ENCODE measurements at regions of chr1 and their contacts with region 1.

Region 1: DNA sequence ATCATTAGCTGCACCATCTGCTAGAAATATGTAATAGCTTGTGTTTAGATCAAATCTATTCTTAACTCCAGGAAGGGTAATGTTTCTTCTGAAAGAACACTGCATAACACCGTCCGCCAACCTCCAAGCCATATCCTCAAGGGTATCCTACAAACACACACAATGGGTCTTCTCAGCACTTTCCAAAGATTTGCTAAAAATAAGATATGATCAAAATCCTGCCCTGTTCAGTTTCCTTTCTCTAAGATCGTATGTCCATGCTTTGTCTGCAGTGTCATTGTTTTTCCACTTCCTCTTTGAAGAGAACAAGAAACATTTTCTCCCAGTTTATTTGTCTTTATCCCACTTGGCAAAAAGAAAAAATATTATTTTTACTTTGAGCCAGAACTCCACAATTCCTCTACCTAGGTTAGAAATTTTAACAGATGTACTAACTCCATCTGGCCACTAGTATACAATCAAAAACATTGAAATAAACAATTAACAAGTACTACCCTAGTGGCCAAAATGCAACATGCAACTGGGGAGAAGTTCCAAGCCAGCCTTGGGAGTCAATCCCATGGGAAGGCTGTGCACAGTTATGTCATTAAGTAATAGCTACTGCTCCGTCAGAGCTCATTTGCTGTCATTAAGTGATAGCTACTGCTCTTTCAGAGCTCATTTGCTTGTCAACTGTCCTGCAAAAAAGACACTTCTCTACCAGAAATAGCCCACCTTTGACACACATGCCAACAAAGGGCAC is 37.8 kb downstream of the FRRS1 start:
- DNase-seq: peak; percentile 69

Region 2: DNA sequence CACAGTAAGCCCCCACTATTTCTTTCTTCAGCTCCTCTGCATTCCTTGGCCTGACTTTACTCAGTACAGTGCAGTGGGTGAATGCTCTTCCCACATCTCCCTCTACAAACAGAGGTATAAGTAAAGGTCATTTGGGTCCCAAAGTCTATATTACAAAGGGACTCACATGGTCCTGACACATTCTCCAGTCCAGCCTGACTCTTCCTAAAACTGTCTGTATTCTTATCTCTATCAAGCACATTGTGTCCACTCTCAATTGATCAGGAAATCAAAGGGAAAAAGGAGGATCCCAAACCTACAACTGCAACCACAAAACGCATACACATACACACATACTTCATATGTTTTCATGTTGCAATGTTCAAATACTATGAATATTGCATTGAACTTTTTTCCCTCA is 11.7 kb before region 1 on chr1:
- CTCF ChIA-PET with region 1: interaction called, 12 read pairs
- POLR2A ChIA-PET with region 1: no interaction called
- DNase-seq: no peak

Measured in HEK293T (cell line).